Panc1 (cell line): ENCODE measurements at regions of chr6 and their contacts with region 1.

Region 1: DNA sequence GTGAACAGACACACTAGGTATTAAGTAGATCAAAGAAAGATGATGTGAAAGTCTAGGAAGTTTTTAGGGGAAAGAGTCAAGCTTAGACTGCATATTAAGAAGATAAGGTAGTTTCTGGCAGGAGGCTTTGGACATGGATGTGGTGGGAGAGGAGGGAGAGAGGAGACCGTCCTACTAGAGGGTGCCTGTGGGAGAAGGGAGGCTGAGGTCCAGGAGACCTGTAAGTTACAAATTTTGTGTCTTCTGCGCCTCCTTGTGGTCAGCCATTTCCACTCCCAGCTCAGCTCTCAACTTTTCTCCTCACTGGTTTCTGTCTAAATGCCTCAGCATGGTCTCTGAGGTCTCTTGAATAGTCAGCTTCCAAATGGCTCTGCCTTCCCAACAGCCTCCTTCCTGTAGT is 193.5 kb downstream of the UNC5CL start:
- DNase-seq: peak; percentile 20
- ATAC-seq: peak; percentile 86
- H3K4me3 ChIP-seq: no peak overlapping the region
- H3K27ac ChIP-seq: peak overlapping the region; percentile 32; the same call in 1 of the 2 replicates
- H3K4me1 ChIP-seq: no peaks in the 10 kb centered on the region
- H3K27me3 ChIP-seq: peaks cover 13% of the 10 kb centered on the region
- CTCF ChIP-seq: peak; percentile 78

Region 2: DNA sequence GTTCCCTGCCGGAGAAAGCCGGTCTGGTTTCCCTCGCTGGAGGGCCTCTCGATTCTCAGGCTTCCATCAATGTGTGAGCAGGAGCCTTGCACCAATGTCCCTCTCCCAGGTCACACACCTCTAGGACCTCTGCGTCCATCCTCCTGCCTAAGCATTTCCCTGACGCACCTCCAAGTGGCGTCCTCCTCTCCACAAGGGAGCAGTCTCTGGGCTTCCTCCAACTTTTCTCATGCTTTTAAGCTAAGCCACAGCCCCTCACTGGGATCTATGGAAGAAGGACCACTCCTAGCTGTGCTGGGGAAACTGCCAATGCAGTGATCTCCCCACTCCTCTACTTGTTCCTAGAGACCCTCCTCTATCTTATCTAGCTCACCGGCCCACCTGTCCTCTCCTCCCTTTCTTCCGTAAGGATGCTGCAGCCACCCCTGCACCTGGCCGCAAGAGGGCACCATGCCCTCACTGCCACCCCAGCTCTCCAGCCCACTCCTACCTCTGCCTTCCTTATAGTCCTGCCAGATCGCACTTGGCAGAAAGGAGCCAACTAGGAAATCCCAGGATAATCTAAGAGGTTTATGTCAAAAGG is 517.1 kb before region 1 on chr6:
- CTCF ChIA-PET with region 1: no interaction called
- POLR2A ChIA-PET with region 1: no interaction called
- in situ Hi-C with region 1: no loop called
- intact Hi-C with region 1: loop called (anchors 10 kb)
- DNase-seq: no peak
- ATAC-seq: peak; percentile 77
- H3K4me3 ChIP-seq: no peak overlapping the region
- H3K27ac ChIP-seq: no peak overlapping the region
- H3K4me1 ChIP-seq: no peaks in the 10 kb centered on the region
- H3K27me3 ChIP-seq: peaks cover 2% of the 10 kb centered on the region; the same call in 1 of the 2 replicates
- CTCF ChIP-seq: peak; percentile 85

Region 3: DNA sequence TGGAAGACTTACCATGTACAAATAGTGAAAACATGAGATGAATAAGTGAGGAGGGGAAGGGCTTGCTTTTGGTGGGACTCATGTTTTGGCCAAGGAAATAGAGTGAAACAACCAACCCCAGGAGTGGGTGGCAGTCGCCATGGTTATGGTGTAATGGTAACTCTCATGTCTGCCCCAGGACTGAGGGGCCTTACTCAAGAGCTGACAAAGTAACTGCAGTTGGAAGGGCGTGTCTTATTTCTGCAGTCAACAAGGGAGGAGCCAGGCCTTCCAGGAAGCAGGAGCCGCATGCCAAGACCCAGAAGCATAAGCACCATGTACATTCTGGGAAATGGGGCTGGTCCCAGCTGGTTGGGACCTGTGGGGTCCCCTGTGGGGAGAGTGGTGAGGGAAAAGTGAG is 85.0 kb after region 1 on chr6:
- CTCF ChIA-PET with region 1: no interaction called
- POLR2A ChIA-PET with region 1: no interaction called
- in situ Hi-C with region 1: no loop called
- intact Hi-C with region 1: no loop called
- DNase-seq: no peak
- ATAC-seq: no peak
- H3K4me3 ChIP-seq: no peak overlapping the region
- H3K27ac ChIP-seq: peak overlapping the region; percentile 54; the same call in 1 of the 2 replicates
- H3K4me1 ChIP-seq: no peaks in the 10 kb centered on the region
- H3K27me3 ChIP-seq: no peaks in the 10 kb centered on the region
- CTCF ChIP-seq: no peak

Region 4: DNA sequence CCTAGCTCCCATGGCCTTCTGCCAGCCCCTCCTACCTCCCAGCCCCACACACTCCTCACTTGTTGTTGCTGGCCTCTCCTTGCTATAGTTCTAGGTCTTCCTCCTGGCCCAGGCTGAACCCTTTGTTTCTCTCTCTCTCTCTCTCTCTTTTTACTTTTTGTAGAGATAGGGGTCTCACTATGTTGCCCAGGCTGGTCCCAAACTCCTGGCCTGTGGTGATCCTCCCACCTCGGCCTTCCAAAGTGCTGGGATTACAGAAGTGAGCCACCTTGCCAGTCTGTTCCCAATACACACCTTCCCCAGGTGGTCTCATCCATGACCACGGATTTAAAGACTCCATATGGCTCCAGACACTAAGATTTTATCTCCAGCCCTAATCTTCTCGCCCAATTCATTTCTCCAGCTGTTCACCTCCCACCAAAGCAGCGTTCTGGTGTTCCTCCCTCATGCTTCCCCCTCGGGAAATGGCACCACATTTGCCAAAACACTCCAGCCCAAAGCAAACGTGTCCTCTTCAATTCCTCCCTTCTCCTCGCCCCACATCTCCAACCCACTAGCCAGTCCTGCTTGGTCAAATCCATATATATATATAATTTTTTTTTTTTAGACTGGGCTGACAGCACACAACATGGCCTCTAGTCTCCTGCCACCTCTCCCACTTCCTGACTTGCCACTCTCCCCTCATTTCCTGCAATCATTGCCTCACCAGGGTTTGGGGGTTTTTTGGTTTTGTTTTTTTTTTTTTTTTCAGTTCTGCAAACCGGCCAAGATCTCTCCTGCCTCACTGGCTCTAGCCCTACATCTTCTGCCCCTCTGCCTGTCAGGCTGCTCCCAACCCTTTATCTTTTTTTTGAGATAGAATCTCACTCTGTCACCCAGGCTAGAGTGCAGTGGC is 594.2 kb after region 1 on chr6:
- CTCF ChIA-PET with region 1: no interaction called
- POLR2A ChIA-PET with region 1: no interaction called
- in situ Hi-C with region 1: no loop called
- intact Hi-C with region 1: no loop called
- DNase-seq: no peak
- ATAC-seq: no peak
- H3K4me3 ChIP-seq: no peak overlapping the region
- H3K27ac ChIP-seq: no peak overlapping the region
- H3K4me1 ChIP-seq: no peaks in the 10 kb centered on the region
- H3K27me3 ChIP-seq: peaks cover 3% of the 10 kb centered on the region; the same call in 1 of the 2 replicates
- CTCF ChIP-seq: no peak